Naive thymus-derived CD4-positive, alpha-beta T cell (primary cell): ENCODE measurements at regions of chr10 and their contacts with region 1.

Region 1: GRCh38 chr10:110263164-110263563 is 41.6 kb downstream of the SMNDC1 start:
- DNase-seq: no peak
- ATAC-seq: no peak
- H3K4me3 ChIP-seq: no peak overlapping the region
- H3K4me3 Mint-ChIP-seq: no peak overlapping the region
- H3K27ac ChIP-seq: no peak overlapping the region
- H3K27ac Mint-ChIP-seq: no peak overlapping the region
- H3K4me1 ChIP-seq: no peaks in the 10 kb centered on the region
- H3K4me1 Mint-ChIP-seq: peaks cover 0 to 37% (median 17%) of the 10 kb centered on the region in 7 donors
- H3K27me3 ChIP-seq: no peaks in the 10 kb centered on the region
- H3K27me3 Mint-ChIP-seq: peaks cover 0 to 60% (median 0%) of the 10 kb centered on the region in 5 donors

Region 2: GRCh38 chr10:110273474-110273873 is 10.3 kb after region 1 on chr10:
- CTCF ChIA-PET with region 1: no interaction called
- POLR2A ChIA-PET with region 1: no interaction called
- intact Hi-C with region 1: loop called in 1 of 2 experiments (anchors 1 kb)
- DNase-seq: peak in 7 of 9 donors; percentile 11 to 72 (median 39)
- ATAC-seq: peak; percentile 73
- H3K4me3 ChIP-seq: no peak overlapping the region
- H3K4me3 Mint-ChIP-seq: peak overlapping the region in 8 of 10 donors; percentile 27 to 79 (median 62)
- H3K27ac ChIP-seq: no peak overlapping the region
- H3K27ac Mint-ChIP-seq: peak overlapping the region in 7 of 9 donors; percentile 10 to 82 (median 52)
- H3K4me1 ChIP-seq: peaks cover 0 to 16% of the 10 kb centered on the region in 2 donors
- H3K4me1 Mint-ChIP-seq: peaks cover 34 to 75% (median 50%) of the 10 kb centered on the region in 7 donors
- H3K27me3 ChIP-seq: no peaks in the 10 kb centered on the region
- H3K27me3 Mint-ChIP-seq: peaks cover 0 to 34% (median 0%) of the 10 kb centered on the region in 5 donors

Region 3: GRCh38 chr10:110279407-110279986 is 16.3 kb after region 1 on chr10:
- CTCF ChIA-PET with region 1: interaction called, 3 read pairs
- POLR2A ChIA-PET with region 1: no interaction called
- intact Hi-C with region 1: loop called in 1 of 2 experiments (anchors 2 kb)
- DNase-seq: peak in 7 of 9 donors; percentile 37 to 61 (median 56)
- ATAC-seq: peak; percentile 82
- H3K4me3 ChIP-seq: no peak overlapping the region
- H3K4me3 Mint-ChIP-seq: peak overlapping the region in 5 of 10 donors; percentile 4 to 52 (median 48)
- H3K27ac ChIP-seq: no peak overlapping the region
- H3K27ac Mint-ChIP-seq: peak overlapping the region in 3 of 9 donors; percentile 8 to 59 (median 48)
- H3K4me1 ChIP-seq: peaks cover 0 to 6% of the 10 kb centered on the region in 2 donors
- H3K4me1 Mint-ChIP-seq: peaks cover 14 to 42% (median 21%) of the 10 kb centered on the region in 7 donors
- H3K27me3 ChIP-seq: no peaks in the 10 kb centered on the region
- H3K27me3 Mint-ChIP-seq: peaks cover 0 to 22% (median 0%) of the 10 kb centered on the region in 5 donors